PC-9 (cell line): ENCODE measurements at regions of chr3 and their contacts with region 1.

Region 1: GRCh38 chr3:49476563-49476962 is 6.5 kb downstream of the DAG1 start:
- DNase-seq: no peak
- H3K4me3 ChIP-seq: no peak overlapping the region
- H3K27ac ChIP-seq: peak overlapping the region; percentile 49
- H3K4me1 ChIP-seq: peaks cover 18% of the 10 kb centered on the region
- H3K27me3 ChIP-seq: no peaks in the 10 kb centered on the region
- CTCF ChIP-seq: no peak

Region 2: DNA sequence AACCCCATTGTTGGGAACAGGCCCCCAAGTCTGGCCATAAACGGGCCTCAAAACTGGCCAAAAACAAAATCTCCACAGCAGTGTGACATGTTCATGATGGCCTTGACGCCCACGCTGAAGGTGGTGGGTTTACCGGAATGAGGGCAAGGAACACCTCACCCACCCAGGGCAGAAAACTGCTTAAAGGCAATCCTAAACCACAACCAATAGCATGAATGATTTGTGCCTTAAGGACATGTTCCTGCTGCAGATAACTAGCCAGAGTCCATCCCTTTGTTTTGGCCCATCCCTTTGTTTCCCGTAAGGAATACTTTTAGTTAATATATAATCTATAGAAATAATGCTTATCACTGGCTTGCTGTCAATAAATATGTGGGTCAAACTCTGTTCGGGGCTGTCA is 257.4 kb before region 1 on chr3:
- CTCF ChIA-PET with region 1: no interaction called
- POLR2A ChIA-PET with region 1: no interaction called
- intact Hi-C with region 1: no loop called
- DNase-seq: no peak
- H3K4me3 ChIP-seq: no peak overlapping the region
- H3K27ac ChIP-seq: peak overlapping the region; percentile 72
- H3K4me1 ChIP-seq: peaks cover 46% of the 10 kb centered on the region
- H3K27me3 ChIP-seq: no peaks in the 10 kb centered on the region
- CTCF ChIP-seq: no peak

Region 3: DNA sequence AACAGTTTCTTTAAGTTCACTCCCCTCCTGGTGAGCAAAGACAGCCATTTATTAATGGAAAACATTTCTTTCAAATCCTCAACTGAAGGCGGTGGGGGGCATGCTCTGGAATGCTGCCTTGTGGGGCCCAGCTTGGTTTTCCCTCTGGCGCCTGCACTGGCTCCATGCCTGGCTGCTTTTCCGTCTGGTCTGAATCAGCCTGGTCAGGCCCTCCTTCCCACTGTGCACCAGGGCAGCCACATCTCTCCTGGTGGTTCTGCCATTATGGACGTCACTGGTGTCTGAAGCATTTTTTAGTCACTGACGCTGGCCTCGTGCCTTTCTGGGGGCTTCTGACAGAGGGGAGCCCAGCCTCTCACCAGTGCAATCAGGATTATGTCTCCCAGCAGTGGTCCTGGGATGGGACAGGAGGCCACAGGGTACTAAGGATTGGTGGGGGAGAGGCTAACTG is 140.0 kb after region 1 on chr3:
- CTCF ChIA-PET with region 1: interaction called, 11 read pairs
- POLR2A ChIA-PET with region 1: no interaction called
- intact Hi-C with region 1: no loop called
- DNase-seq: no peak
- H3K4me3 ChIP-seq: no peak overlapping the region
- H3K27ac ChIP-seq: no peak overlapping the region
- H3K4me1 ChIP-seq: no peaks in the 10 kb centered on the region
- H3K27me3 ChIP-seq: no peaks in the 10 kb centered on the region
- CTCF ChIP-seq: no peak

Region 4: DNA sequence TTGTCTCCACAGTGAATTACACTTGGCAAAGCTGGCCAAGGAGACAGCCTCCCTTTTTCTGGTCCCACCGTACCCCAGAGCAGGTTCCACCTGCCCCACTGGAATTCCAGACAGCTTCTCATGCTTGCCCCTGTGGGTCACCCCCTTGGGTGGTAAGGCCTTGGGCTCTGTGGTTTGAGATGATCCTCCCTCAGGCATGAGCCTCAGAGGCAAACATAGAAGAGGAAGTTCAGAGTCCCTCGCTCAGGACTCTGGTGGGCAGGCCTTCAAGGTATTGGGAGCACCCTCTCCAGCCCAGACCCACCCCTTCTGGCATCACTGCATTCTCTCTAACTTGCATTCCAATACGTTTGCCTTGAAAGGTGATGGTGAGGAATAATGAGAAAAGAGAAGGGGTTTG is 354.8 kb after region 1 on chr3:
- CTCF ChIA-PET with region 1: no interaction called
- POLR2A ChIA-PET with region 1: no interaction called
- intact Hi-C with region 1: no loop called
- DNase-seq: no peak
- H3K4me3 ChIP-seq: no peak overlapping the region
- H3K27ac ChIP-seq: no peak overlapping the region
- H3K4me1 ChIP-seq: no peaks in the 10 kb centered on the region
- H3K27me3 ChIP-seq: no peaks in the 10 kb centered on the region
- CTCF ChIP-seq: no peak

Region 5: DNA sequence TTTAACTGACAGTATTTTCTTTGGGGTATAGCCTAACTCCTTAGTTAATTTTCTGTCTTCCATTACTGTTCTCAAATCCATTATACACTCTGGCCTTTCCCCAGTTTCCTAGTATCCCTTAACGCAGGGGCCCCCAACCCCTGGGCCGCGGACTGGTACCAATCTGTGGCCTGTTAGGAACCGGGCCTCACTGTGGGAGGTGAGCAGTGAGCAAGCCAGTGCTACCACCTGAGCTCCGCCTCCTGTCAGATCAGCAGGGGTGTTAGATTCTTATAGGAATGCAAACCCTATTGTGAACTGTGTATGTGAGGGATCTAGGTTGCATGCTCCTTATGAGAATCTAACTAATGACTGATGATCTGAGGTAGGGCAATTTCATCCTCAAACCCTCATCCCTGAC is 1273.3 kb after region 1 on chr3:
- CTCF ChIA-PET with region 1: no interaction called
- POLR2A ChIA-PET with region 1: no interaction called
- intact Hi-C with region 1: no loop called
- DNase-seq: no peak
- H3K4me3 ChIP-seq: no peak overlapping the region
- H3K27ac ChIP-seq: no peak overlapping the region
- H3K4me1 ChIP-seq: no peaks in the 10 kb centered on the region
- H3K27me3 ChIP-seq: no peaks in the 10 kb centered on the region
- CTCF ChIP-seq: no peak